ENCODE measurements at regions of chr3 and their contacts with region 1.

Region 1: GRCh38 chr3:187616307-187616972 is 53.8 kb downstream of the SST start:
- DNase-seq: peak; percentile 76

Region 2: GRCh38 chr3:187342255-187342654 is 274.2 kb before region 1 on chr3:
- in situ Hi-C with region 1: loop called (anchors 10 kb)
- DNase-seq: no peak

Measured in SK-MEL-5 (cell line).